ENCODE measurements at regions of chr12 and their contacts with region 1.

Region 1: GRCh38 chr12:116202940-116203339 is 74.6 kb downstream of the MED13L start:
- DNase-seq: no peak
- H3K4me3 ChIP-seq: no peak overlapping the region
- H3K27ac ChIP-seq: no peak overlapping the region
- H3K4me1 ChIP-seq: peaks cover 4 to 6% (median 6%) of the 10 kb centered on the region in 4 experiments
- H3K27me3 ChIP-seq: no peaks in the 10 kb centered on the region

Region 2: DNA sequence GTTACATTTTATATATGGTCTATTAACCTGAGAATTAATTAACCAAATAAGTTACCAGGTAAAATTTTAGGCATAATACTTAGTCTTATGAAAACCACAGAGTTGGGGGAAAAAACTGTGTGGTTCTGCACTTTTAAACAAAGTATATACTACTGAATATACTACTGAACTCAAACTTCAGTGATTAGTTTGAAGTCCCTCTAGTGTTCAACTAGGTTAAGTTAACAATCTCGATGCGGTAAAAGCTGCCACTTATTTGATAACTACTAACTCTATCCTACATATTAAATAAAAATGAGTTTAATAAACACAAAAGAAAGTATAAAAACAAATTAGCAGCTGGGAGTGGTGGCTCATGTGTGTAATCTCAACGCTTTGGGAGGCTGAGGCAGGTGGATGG is 17.8 kb after region 1 on chr12:
- CTCF ChIA-PET with region 1: interaction called, 10 read pairs
- POLR2A ChIA-PET with region 1: interaction called, 3 read pairs
- DNase-seq: no peak
- H3K4me3 ChIP-seq: no peak overlapping the region
- H3K27ac ChIP-seq: no peak overlapping the region
- H3K4me1 ChIP-seq: peaks cover 0 to 9% (median 6%) of the 10 kb centered on the region in 4 experiments
- H3K27me3 ChIP-seq: no peaks in the 10 kb centered on the region

Measured in common myeloid progenitor, CD34-positive (primary cell).